Caco-2 (cell line): ENCODE measurements at regions of chr5 and their contacts with region 1.

Region 1: GRCh38 chr5:38193015-38193581 is 65.3 kb upstream of the EGFLAM start:
- DNase-seq: peak; percentile 64 to 71
- H3K4me3 ChIP-seq: no peak overlapping the region
- H3K4me3 Mint-ChIP-seq: no peak overlapping the region
- H3K27ac Mint-ChIP-seq: no peak overlapping the region
- H3K4me1 ChIP-seq: no peaks in the 10 kb centered on the region
- H3K4me1 Mint-ChIP-seq: no peaks in the 10 kb centered on the region
- H3K27me3 ChIP-seq: no peaks in the 10 kb centered on the region; the same call in 1 of the 2 replicates
- H3K27me3 Mint-ChIP-seq: peaks cover 10% of the 10 kb centered on the region
- CTCF ChIP-seq: peak; percentile 88 to 93

Region 2: DNA sequence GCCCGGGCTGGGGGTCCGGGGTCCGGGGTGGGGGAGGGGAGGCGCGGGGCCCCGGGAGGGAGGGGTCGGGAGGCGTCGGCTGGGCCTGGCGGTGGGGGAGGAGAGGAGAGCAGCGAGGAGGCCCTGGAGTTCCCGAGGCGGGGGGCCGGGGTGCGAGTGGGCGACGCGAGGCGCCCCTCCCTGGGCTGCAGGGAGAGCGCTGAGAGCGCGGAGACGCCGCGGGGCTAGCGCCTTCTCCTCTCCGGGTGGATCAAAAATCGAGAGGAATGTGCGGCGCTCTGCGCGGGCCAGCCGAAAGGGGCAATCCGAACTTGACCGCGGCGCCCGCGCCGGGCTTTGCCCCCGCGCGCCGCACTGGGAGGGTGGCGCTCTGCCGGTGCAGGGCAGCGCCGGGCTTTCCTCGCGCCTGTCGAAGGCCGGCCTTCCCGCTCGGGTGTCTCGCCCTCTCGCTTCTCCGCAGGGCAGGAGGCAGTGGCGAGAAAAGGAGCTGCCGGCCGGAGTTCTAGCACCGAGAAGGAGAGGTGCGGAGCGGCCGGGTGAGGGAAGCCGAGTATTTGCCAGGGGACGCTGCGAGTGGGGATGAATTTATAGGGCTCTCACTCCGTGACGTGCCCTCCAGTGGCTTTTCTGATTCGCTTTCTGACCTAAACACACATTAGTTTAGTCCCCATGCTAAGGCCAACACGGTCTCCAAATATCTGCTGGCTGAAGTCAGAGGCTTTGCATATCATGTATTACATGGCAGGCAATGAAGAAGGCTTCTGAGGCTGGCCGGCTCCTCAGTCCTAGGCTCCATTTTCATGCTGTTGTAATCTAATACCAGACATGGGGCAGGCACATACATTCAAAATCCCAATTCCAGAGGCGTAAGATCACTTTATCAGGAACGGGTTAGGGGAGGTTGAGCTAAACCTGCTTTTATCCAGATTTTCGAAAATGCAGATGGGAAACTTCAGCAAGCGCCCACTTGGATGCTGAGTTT is 352.8 kb before region 1 on chr5:
- CTCF ChIA-PET with region 1: no interaction called
- POLR2A ChIA-PET with region 1: no interaction called
- intact Hi-C with region 1: loop called (anchors 10 kb)
- DNase-seq: peak in 1 of 2 experiments; percentile 46
- H3K4me3 ChIP-seq: peak overlapping the region; percentile 33
- H3K4me3 Mint-ChIP-seq: peak overlapping the region; percentile 62
- H3K27ac Mint-ChIP-seq: no peak overlapping the region
- H3K4me1 ChIP-seq: no peaks in the 10 kb centered on the region; the same call in 1 of the 2 replicates
- H3K4me1 Mint-ChIP-seq: no peaks in the 10 kb centered on the region
- H3K27me3 ChIP-seq: 0 out of 2 replicates have a peak, but pooled peaks cover 1% of the 10 kb centered on the region
- H3K27me3 Mint-ChIP-seq: peaks cover 5% of the 10 kb centered on the region
- CTCF ChIP-seq: peak in 1 of 2 experiments; percentile 23

Region 3: DNA sequence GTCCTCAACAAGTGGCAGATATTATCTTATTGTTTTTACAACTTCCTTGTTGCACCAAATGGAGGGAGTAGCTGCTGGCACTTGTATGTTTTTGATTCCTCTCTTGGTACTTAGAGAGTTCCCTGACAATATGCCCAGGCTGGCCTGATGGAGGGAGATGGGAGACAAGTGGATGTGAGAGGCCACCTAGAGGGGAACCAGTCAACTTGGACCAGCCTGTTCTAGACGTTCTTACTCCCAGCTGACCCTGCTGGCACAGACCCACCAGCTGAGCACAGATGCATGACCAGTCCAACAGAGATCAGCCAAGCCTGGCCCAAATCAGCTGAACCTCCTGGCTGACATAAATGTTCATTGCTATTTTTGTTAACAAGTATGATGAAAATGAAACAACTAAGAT is 292.4 kb before region 1 on chr5:
- CTCF ChIA-PET with region 1: no interaction called
- POLR2A ChIA-PET with region 1: no interaction called
- intact Hi-C with region 1: loop called (anchors 10 kb)
- DNase-seq: peak in 1 of 2 experiments; percentile 27
- H3K4me3 ChIP-seq: no peak overlapping the region
- H3K4me3 Mint-ChIP-seq: no peak overlapping the region
- H3K27ac Mint-ChIP-seq: no peak overlapping the region
- H3K4me1 ChIP-seq: no peaks in the 10 kb centered on the region
- H3K4me1 Mint-ChIP-seq: no peaks in the 10 kb centered on the region
- H3K27me3 ChIP-seq: peaks cover 1% of the 10 kb centered on the region; the same call in 1 of the 2 replicates
- H3K27me3 Mint-ChIP-seq: peaks cover 3% of the 10 kb centered on the region
- CTCF ChIP-seq: peak in 1 of 2 experiments; percentile 36

Region 4: GRCh38 chr5:37938076-37938853 is 254.8 kb before region 1 on chr5:
- CTCF ChIA-PET with region 1: no interaction called
- POLR2A ChIA-PET with region 1: no interaction called
- intact Hi-C with region 1: loop called (anchors 10 kb)
- DNase-seq: no peak
- H3K4me3 ChIP-seq: no peak overlapping the region
- H3K4me3 Mint-ChIP-seq: no peak overlapping the region
- H3K27ac Mint-ChIP-seq: no peak overlapping the region
- H3K4me1 ChIP-seq: no peaks in the 10 kb centered on the region
- H3K4me1 Mint-ChIP-seq: no peaks in the 10 kb centered on the region
- H3K27me3 ChIP-seq: no peaks in the 10 kb centered on the region
- H3K27me3 Mint-ChIP-seq: peaks cover 4% of the 10 kb centered on the region
- CTCF ChIP-seq: no peak

Region 5: DNA sequence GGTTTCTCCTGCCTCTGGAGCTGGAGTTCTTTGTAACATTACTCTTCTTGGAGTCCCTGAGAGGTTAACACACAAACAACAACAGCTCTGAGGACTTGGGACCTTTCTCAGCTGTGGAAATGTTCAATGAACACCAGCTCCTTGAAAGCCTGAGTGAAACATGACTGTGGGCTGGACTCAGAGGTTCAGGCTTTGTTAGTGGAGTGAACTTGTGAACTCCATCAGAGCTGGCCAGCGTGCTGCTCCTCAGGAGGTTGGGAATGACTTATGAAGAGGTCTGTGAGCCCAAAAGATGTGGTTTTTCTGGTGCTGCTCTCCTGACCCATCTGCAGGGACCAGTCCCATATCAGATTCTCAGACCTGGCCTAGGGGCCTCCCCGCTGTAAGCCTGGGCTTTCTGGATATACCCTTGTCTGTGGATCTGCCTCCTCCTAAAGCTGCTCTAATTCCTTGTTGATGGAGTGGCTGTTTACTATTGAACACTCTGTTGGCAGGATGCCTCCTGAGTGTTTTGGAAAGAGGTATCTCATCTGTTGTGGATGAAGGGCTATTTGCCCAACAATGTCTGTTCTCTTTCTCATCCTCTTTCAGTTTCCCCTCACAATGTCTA is 183.2 kb before region 1 on chr5:
- CTCF ChIA-PET with region 1: no interaction called
- POLR2A ChIA-PET with region 1: no interaction called
- intact Hi-C with region 1: loop called (anchors 2 kb)
- DNase-seq: no peak
- H3K4me3 ChIP-seq: no peak overlapping the region
- H3K4me3 Mint-ChIP-seq: no peak overlapping the region
- H3K27ac Mint-ChIP-seq: no peak overlapping the region
- H3K4me1 ChIP-seq: no peaks in the 10 kb centered on the region
- H3K4me1 Mint-ChIP-seq: no peaks in the 10 kb centered on the region
- H3K27me3 ChIP-seq: no peaks in the 10 kb centered on the region
- H3K27me3 Mint-ChIP-seq: peaks cover 18% of the 10 kb centered on the region
- CTCF ChIP-seq: no peak

Region 6: DNA sequence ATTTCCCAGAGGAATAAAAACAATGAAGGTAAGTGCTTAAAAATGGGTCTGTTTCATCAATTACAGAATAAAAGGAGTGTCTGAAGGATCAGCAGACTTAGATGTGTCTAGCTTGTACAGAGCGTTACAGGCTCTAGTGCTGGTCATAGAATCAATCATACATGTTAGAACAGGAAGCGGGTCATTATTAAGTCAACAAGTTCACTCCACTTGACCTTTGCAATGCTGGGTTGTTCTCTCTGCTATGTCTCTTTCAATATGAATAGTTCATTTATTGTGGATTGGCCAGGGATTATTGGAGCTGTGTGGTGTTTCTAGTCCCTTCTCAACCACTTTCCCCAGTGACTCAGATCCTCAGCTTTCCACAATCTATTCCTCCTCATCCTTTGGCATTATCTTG is 44.6 kb after region 1 on chr5:
- CTCF ChIA-PET with region 1: no interaction called
- POLR2A ChIA-PET with region 1: no interaction called
- intact Hi-C with region 1: no loop called
- DNase-seq: no peak
- H3K4me3 ChIP-seq: no peak overlapping the region
- H3K4me3 Mint-ChIP-seq: no peak overlapping the region
- H3K27ac Mint-ChIP-seq: no peak overlapping the region
- H3K4me1 ChIP-seq: no peaks in the 10 kb centered on the region
- H3K4me1 Mint-ChIP-seq: no peaks in the 10 kb centered on the region
- H3K27me3 ChIP-seq: no peaks in the 10 kb centered on the region; the same call in 1 of the 2 replicates
- H3K27me3 Mint-ChIP-seq: peaks cover 11% of the 10 kb centered on the region
- CTCF ChIP-seq: no peak